BJ (cell line): ENCODE measurements at regions of chr11 and their contacts with region 1.

Region 1: GRCh38 chr11:76124905-76125770 is 81.2 kb downstream of the WNT11 start:
- DNase-seq: no peak
- H3K4me3 ChIP-seq: no peak overlapping the region
- H3K27me3 ChIP-seq: no peaks in the 10 kb centered on the region
- CTCF ChIP-seq: no peak

Region 2: DNA sequence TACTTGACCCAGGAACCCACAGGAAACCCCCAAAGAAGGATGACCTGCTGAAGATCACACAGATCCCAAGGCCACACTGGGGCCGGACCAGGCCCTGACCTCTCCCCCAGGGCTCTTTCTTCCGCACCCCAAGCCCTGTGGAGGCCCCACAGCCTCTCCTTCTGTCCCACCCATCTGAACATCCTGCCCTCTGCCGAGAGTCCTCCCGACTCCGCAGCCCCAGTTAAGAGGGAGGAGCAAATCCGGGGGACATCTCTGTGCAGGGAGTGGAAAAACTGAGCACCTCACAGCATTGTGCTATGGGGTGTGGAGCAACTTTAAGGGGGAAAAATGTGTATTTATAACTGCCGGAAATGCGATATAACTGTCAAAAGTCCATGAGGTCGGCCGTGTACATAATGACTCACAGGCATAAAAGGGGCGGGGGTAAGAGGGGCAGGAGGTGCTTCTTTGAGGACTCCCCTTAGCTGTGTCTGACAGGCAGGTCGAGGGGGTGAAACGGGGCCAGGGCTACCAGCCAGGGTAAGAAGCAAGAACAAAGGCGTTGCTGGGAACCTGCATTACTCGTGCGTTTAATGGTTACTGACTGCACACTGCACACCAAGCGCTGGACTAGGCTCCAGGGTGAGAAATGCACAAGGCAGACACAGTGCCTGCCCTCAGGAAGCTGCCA is 23.9 kb after region 1 on chr11:
- CTCF ChIA-PET with region 1: no interaction called
- POLR2A ChIA-PET with region 1: no interaction called
- DNase-seq: no peak
- H3K4me3 ChIP-seq: no peak overlapping the region
- H3K27me3 ChIP-seq: no peaks in the 10 kb centered on the region; the same call in none of the 2 replicates
- CTCF ChIP-seq: no peak

Region 3: DNA sequence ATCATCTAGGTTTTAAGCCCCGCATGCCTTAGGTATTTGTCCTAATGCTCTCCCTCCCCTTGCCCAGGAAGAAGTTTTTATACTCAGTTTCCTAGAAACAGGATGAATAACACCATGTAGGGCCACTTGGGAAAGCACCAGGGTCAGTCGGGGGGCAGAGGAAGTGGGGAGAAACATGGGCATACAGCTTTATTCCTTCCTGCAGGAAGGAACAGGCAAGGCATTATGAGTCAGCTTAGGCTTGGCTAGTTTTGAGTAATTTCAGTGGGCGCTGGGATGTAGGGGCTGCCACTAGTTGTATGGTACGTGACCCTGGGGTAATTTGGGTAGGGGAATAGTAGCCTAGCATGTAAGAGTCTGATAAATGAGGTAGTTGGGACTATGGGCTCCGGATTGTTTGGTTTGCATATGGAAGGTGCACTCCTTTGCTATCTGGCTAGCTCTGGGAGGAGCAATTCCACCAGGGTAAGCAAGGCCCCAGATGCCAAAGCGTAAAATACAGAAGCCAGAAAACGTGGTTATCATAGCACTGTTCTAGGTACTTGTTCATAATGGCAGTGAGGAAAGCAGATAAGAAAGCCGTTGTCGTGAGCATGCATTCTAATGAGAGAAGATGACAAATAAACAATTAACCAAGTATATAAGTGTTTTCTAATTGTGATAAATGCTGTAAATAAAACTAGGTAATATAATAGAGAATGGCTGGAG is 760.4 kb after region 1 on chr11:
- CTCF ChIA-PET with region 1: no interaction called
- POLR2A ChIA-PET with region 1: interaction called, 18 read pairs
- DNase-seq: no peak
- H3K4me3 ChIP-seq: no peak overlapping the region
- H3K27me3 ChIP-seq: no peaks in the 10 kb centered on the region
- CTCF ChIP-seq: no peak